Breast epithelium (tissue), 4 donors: ENCODE measurements at regions of chr16 and their contacts with region 1.

Region 1: GRCh38 chr16:30091474-30092372 is at the start of gene TBX6:
- DNase-seq: peak; percentile 86 to 89
- H3K4me3 ChIP-seq: peak within 1 kb of the TSS; percentile 49 to 67 (median 61)
- H3K27ac ChIP-seq: peak within 1 kb of the TSS; percentile 79 to 84
- H3K4me1 ChIP-seq: peaks cover 17% of the 10 kb centered on the region in 2 donors
- H3K27me3 ChIP-seq: no peaks in the 10 kb centered on the region
- CTCF ChIP-seq: peak; percentile 61 to 94 (median 91)
- POLR2A ChIP-seq: peak; percentile 47
- total RNA-seq, gene TBX6: 0.73 to 0.98 (median 0.80) TPM

Region 2: GRCh38 chr16:30065143-30065850 is 26.4 kb before region 1 on chr16 and contains the start of gene ALDOA:
- intact Hi-C with region 1: no loop called
- DNase-seq: peak; percentile 97 to 98
- H3K4me3 ChIP-seq: peak within 1 kb of the TSS; percentile 87 to 97 (median 95)
- H3K27ac ChIP-seq: peak within 1 kb of the TSS; percentile 93 to 98
- H3K4me1 ChIP-seq: peaks cover 13 to 17% of the 10 kb centered on the region in 2 donors
- H3K27me3 ChIP-seq: no peaks in the 10 kb centered on the region
- CTCF ChIP-seq: no peak
- POLR2A ChIP-seq: peak; percentile 7
- total RNA-seq, gene ALDOA: 479 to 672 (median 540) TPM

Region 3: GRCh38 chr16:30370444-30371247 is 278.9 kb after region 1 on chr16 and contains the start of gene TBC1D10B:
- intact Hi-C with region 1: no loop called
- DNase-seq: peak; percentile 99 to 100
- H3K4me3 ChIP-seq: peak within 1 kb of the TSS; percentile 87 to 98 (median 88)
- H3K27ac ChIP-seq: peak within 1 kb of the TSS; percentile 92 to 97
- H3K4me1 ChIP-seq: peaks cover 0 to 18% of the 10 kb centered on the region in 2 donors
- H3K27me3 ChIP-seq: no peaks in the 10 kb centered on the region
- CTCF ChIP-seq: peak in 1 of 3 donors; percentile 26
- POLR2A ChIP-seq: no peak
- total RNA-seq, gene TBC1D10B: 19.0 to 22.2 (median 21.0) TPM

Region 4: DNA sequence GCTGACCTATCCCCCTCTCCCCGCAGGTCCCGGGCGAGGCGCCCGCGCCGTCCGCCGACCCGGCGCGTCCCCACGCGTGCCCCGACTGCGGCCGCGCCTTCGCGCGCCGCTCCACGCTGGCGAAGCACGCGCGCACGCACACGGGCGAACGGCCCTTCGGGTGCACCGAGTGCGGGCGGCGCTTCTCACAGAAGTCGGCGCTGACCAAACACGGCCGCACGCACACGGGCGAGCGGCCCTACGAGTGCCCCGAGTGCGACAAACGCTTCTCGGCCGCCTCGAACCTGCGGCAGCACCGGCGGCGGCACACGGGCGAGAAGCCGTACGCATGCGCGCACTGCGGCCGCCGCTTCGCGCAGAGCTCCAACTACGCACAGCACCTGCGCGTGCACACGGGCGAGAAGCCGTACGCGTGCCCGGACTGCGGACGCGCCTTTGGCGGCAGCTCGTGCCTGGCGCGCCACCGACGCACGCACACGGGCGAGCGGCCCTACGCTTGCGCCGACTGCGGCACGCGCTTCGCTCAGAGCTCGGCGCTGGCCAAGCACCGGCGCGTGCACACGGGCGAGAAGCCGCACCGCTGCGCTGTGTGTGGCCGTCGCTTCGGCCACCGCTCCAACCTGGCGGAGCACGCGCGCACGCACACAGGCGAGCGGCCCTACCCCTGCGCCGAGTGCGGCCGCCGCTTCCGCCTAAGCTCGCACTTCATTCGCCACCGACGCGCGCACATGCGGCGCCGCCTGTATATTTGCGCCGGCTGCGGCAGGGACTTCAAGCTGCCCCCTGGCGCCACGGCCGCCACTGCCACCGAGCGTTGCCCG is 326.0 kb after region 1 on chr16:
- intact Hi-C with region 1: loop called (anchors 10 kb)
- DNase-seq: peak; percentile 46 to 75
- H3K4me3 ChIP-seq: peak overlapping the region; percentile 51 to 72 (median 70)
- H3K27ac ChIP-seq: peak overlapping the region; percentile 76 to 81
- H3K4me1 ChIP-seq: no peaks in the 10 kb centered on the region
- H3K27me3 ChIP-seq: no peaks in the 10 kb centered on the region
- CTCF ChIP-seq: no peak
- POLR2A ChIP-seq: no peak